CD4-positive, alpha-beta memory T cell (primary cell): ENCODE measurements at regions of chr12 and their contacts with region 1.

Region 1: DNA sequence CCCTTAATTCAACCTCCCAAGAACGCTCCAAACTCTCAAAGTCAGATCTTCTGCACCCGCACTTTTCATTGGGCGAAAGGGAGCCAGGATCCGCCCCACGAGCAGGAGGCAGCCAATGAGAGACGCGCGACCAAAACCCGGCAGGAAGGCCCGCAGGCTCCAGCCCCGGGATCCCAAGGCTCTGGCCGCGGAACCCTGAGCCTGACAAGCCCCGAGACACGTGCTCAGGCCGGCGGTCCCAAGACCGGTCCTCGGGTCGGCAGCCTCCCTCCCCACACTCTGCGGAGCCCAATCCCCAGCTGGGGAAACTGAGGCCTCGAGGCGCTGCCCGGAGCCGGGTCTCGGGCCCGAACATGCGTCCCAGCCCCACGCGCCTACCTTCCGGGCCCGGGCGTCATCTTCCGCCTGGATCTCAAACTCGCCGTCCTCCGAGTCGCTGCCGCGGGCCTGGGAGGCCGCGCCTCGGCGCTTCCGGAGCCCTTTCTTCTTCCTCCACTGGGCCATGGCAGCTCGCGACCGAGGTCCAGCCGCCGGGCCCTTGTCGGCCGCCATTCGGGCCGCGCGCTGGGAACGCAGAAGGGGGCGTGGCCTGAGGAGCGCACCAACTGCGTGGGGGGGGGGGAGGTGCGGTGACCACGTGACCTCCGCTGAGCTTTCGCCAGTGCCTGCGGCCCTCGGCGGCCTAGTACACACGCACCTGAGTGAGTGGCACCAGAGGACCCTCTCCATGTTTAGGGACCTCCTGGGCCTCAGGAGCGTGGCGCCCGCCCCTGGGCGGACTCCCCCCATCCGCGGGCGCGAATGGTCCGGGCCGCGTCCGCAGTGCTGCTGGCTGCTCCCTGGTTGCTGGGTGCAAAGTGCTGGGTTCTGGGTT is at the starts of genes DDX54 and RITA1:
- DNase-seq: peak; percentile 90 to 95 (median 91)
- H3K4me3 ChIP-seq: peak within 1 kb of the TSS; percentile 74 to 91
- H3K4me3 Mint-ChIP-seq: peak within 1 kb of the TSS; percentile 95 to 98 (median 96)
- H3K27ac ChIP-seq: peak within 1 kb of the TSS; percentile 92
- H3K27ac Mint-ChIP-seq: peak within 1 kb of the TSS; percentile 95 to 98 (median 97)
- H3K4me1 ChIP-seq: peaks cover 42% of the 10 kb centered on the region
- H3K4me1 Mint-ChIP-seq: peaks cover 25 to 53% (median 37%) of the 10 kb centered on the region in 4 donors
- H3K27me3 ChIP-seq: no peaks in the 10 kb centered on the region
- H3K27me3 Mint-ChIP-seq: no peaks in the 10 kb centered on the region
- total RNA-seq, gene DDX54: 64.9 to 69.4 TPM
- total RNA-seq, gene RITA1: 12.8 to 14.2 TPM

Region 2: DNA sequence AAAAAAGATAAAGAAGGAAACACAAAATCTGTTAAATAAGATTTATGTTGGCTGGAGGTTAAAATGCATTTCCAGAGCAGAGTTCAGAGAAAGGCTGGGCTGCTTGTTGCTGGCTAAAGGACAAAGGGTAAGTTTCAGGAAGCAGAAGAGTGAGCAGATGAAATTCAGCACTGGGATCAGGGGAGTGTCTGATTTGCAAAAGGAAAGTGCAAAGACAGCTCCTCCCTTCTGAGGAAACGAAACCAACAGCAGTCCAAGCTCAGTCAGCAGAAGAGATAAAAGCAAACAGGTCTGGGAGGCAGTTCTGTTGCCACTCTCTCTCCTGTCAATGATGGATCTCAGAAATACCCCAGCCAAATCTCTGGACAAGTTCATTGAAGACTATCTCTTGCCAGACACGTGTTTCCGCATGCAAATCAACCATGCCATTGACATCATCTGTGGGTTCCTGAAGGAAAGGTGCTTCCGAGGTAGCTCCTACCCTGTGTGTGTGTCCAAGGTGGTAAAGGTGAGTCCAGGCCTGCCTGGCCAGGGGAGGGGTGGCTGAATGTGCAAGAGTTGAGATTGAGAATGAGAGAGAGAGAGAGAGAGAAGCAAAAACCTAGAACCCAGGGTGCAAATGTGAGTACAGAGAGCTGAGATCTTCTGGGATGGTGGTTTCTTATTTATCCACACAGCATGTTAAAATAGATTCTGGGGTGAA is 278.3 kb before region 1 on chr12 and contains the start of gene OAS1:
- CTCF ChIA-PET with region 1: no interaction called
- POLR2A ChIA-PET with region 1: interaction called, 3 read pairs
- intact Hi-C with region 1: loop called (anchors 10 kb)
- DNase-seq: peak; percentile 40 to 58 (median 47)
- H3K4me3 ChIP-seq: peak within 1 kb of the TSS; percentile 69 to 79
- H3K4me3 Mint-ChIP-seq: peak within 1 kb of the TSS; percentile 89 to 98 (median 96)
- H3K27ac ChIP-seq: peak within 1 kb of the TSS; percentile 68
- H3K27ac Mint-ChIP-seq: peak within 1 kb of the TSS; percentile 86 to 97 (median 94)
- H3K4me1 ChIP-seq: peaks cover 79% of the 10 kb centered on the region
- H3K4me1 Mint-ChIP-seq: peaks cover 52 to 91% (median 72%) of the 10 kb centered on the region in 4 donors
- H3K27me3 ChIP-seq: no peaks in the 10 kb centered on the region
- H3K27me3 Mint-ChIP-seq: no peaks in the 10 kb centered on the region
- total RNA-seq, gene OAS1: 8.4 to 10.9 TPM

Region 3: GRCh38 chr12:113103756-113104450 is 81.2 kb before region 1 on chr12:
- CTCF ChIA-PET with region 1: interaction called, 3 read pairs
- POLR2A ChIA-PET with region 1: interaction called, 11 read pairs
- intact Hi-C with region 1: no loop called
- DNase-seq: peak; percentile 67 to 78 (median 74)
- H3K4me3 ChIP-seq: peak overlapping the region in 1 of 2 donors; percentile 64
- H3K4me3 Mint-ChIP-seq: peak overlapping the region; percentile 80 to 89 (median 86)
- H3K27ac ChIP-seq: peak overlapping the region; percentile 1
- H3K27ac Mint-ChIP-seq: peak overlapping the region; percentile 66 to 94 (median 87)
- H3K4me1 ChIP-seq: peaks cover 6% of the 10 kb centered on the region
- H3K4me1 Mint-ChIP-seq: peaks cover 9 to 24% (median 14%) of the 10 kb centered on the region in 4 donors
- H3K27me3 ChIP-seq: no peaks in the 10 kb centered on the region
- H3K27me3 Mint-ChIP-seq: peaks cover 0 to 1% of the 10 kb centered on the region in 2 donors

Region 4: DNA sequence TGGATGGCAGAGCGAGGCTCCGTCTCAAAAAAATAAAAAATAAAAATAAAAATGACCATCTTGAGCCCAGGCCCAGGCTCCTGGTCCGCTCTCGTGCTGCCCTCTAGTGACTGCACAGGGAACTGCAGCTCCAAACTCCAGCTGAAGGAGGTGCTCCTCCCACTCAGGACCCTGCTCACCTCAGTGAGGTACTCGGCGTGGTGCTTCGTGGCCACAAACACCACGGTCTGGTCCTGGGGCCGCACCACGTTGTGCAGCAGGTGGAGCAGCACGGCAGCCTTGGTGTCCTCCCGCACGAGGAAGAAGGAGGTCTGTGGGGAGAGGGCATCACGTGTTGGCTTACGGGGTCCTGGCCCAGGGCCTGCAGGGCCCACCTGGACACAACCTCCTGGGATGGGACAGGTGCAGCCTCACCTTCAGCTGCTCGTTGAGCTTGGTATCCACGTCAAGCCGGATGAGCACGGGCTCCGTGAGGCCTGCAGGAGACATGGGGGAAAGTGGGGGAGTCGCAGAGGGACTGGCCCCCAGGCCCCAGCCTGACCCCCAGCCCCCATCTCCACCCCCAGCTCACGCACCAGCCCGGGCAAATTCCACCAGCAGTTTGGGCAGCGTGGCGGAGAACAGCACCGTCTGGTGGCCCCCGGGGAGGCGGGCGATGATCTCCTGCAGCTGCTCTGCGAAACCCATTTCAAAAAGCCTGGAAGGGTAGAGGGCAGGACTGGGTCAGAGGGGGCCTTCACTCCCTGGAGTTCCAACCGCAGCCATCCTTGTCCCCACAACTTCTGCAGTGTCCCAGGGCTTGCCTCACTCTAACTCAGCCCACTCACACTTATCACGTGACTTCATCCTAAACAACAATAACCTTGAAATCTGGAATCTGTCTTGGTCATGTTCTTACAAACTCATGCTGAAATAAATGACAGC is 10.4 kb before region 1 on chr12:
- CTCF ChIA-PET with region 1: interaction called, 14 read pairs
- POLR2A ChIA-PET with region 1: interaction called, 6 read pairs
- intact Hi-C with region 1: no loop called
- DNase-seq: peak; percentile 67 to 72 (median 68)
- H3K4me3 ChIP-seq: no peak overlapping the region
- H3K4me3 Mint-ChIP-seq: no peak overlapping the region
- H3K27ac ChIP-seq: no peak overlapping the region
- H3K27ac Mint-ChIP-seq: peak overlapping the region in 4 of 7 donors; percentile 42 to 80 (median 66)
- H3K4me1 ChIP-seq: no peaks in the 10 kb centered on the region
- H3K4me1 Mint-ChIP-seq: peaks cover 2 to 7% (median 4%) of the 10 kb centered on the region in 4 donors
- H3K27me3 ChIP-seq: no peaks in the 10 kb centered on the region
- H3K27me3 Mint-ChIP-seq: no peaks in the 10 kb centered on the region

Region 5: GRCh38 chr12:113221181-113221997 is 36.3 kb after region 1 on chr12 and contains the start of gene TPCN1:
- CTCF ChIA-PET with region 1: no interaction called
- POLR2A ChIA-PET with region 1: interaction called, 55 read pairs
- intact Hi-C with region 1: loop called (anchors 1 kb)
- DNase-seq: peak; percentile 97 to 100 (median 99)
- H3K4me3 ChIP-seq: peak within 1 kb of the TSS; percentile 66 to 79
- H3K4me3 Mint-ChIP-seq: peak within 1 kb of the TSS; percentile 92 to 95 (median 94)
- H3K27ac ChIP-seq: peak within 1 kb of the TSS; percentile 70
- H3K27ac Mint-ChIP-seq: peak within 1 kb of the TSS; percentile 85 to 97 (median 94)
- H3K4me1 ChIP-seq: peaks cover 39% of the 10 kb centered on the region
- H3K4me1 Mint-ChIP-seq: peaks cover 25 to 45% (median 37%) of the 10 kb centered on the region in 4 donors
- H3K27me3 ChIP-seq: no peaks in the 10 kb centered on the region
- H3K27me3 Mint-ChIP-seq: no peaks in the 10 kb centered on the region
- total RNA-seq, gene TPCN1: 79.8 to 94.2 TPM

Region 6: DNA sequence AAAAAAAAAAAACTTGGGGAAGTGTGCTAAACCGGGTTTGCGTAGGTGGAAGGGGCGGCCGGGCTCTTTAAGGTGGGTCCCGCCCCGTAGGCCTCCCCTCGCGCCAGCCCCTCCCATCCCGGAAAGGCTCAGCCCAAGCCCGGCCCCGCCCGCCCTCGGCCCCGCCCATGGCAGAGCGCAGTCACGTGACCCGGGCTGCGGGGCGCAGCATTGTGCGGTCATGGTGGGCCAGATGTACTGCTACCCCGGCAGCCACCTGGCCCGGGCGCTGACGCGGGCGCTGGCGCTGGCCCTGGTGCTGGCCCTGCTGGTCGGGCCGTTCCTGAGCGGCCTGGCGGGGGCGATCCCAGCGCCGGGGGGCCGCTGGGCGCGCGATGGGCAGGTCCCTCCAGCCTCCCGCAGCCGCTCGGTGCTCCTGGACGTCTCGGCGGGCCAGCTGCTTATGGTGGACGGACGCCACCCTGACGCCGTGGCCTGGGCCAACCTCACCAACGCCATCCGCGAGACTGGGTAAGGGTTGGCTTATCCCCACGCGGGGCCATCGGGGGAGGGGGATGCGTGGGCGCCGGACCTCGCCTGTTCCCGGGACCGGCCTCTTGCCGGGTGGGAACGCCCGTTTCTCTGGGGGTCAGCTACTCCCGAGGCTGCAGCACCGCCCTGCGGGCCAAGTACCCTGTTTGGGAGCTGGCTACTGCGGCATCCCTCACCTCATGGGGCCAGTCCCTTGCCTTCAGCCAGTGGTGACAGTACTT is 173.4 kb after region 1 on chr12 and contains the start of gene PLBD2:
- CTCF ChIA-PET with region 1: no interaction called
- POLR2A ChIA-PET with region 1: interaction called, 6 read pairs
- intact Hi-C with region 1: loop called (anchors 1 kb)
- DNase-seq: peak; percentile 92 to 95 (median 93)
- H3K4me3 ChIP-seq: peak within 1 kb of the TSS; percentile 63 to 70
- H3K4me3 Mint-ChIP-seq: peak within 1 kb of the TSS; percentile 89 to 94 (median 92)
- H3K27ac ChIP-seq: peak within 1 kb of the TSS; percentile 63
- H3K27ac Mint-ChIP-seq: peak within 1 kb of the TSS; percentile 91 to 98 (median 97)
- H3K4me1 ChIP-seq: peaks cover 19% of the 10 kb centered on the region
- H3K4me1 Mint-ChIP-seq: peaks cover 6 to 24% (median 16%) of the 10 kb centered on the region in 4 donors
- H3K27me3 ChIP-seq: no peaks in the 10 kb centered on the region
- H3K27me3 Mint-ChIP-seq: no peaks in the 10 kb centered on the region
- total RNA-seq, gene PLBD2: 15.6 to 18.4 TPM